Activated T-helper 1 cell treated with anti-CD3 and anti-CD28 coated beads, Interleukin-12 subunit alpha, Interleukin-12 subunit beta, Interleukin-2, Interleukin-4 antibody, amounts not matched to agents 30 ng/mL and 10 ng/mL and 1 ng/mL, durations not matched to agents 14 hours and 24 hours and 36 hours (primary cell): ENCODE measurements at regions of chr2 and their contacts with region 1.

Region 1: DNA sequence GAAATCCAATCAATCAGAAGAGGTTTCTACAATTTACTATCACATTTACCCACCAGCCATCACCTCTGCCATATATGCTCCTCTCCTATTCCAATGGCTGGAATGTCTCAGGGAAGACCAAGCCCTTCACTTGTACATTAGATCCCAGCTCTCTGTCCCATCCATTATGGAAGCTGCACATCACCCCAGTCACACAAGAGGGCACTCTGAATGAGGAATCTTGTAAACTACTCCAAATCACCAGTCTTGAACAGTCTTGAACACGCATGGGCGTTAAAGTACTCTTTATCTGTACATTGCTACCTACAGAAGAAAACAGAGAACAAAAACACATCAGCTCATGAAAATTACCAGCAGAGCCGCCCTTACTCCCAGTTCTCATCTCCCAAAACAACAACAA is 38.7 kb downstream of the ZC3H8 start:
- DNase-seq: no peak
- H3K4me3 Mint-ChIP-seq: no peak overlapping the region
- H3K27ac Mint-ChIP-seq: no peak overlapping the region
- H3K4me1 Mint-ChIP-seq: peaks cover 3% of the 10 kb centered on the region
- H3K27me3 Mint-ChIP-seq: no peaks in the 10 kb centered on the region

Region 2: DNA sequence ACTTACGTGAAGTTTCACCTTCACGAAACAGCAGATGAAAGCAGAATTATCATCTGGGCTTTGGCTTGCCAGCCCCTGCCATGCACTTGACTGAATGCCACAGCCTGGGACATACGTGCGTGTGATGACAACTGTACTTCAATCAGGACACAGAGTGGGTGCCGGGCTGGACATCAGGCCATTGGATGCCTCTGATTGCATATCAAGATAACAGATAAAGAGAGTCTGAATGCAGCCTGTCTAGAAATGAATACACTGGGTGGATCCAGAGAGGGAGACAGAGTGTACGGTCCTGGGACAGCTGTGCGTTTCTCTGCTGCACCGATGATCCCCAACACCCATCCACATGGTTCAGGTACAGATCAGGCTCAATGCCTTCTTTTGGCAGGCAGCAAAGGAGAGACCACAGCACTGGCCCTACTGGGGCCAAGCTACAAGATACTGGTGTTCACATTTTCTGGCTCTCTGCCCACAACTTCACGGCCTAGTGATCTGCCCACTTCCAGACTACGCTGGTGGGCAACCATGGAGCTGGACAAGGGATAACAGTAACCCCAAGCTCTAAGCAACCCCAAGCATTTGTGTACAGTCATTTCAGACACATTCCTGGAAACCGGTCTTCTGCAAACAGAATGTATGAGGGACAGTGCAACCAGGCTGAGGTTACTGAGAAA is 42.4 kb before region 1 on chr2:
- intact Hi-C with region 1: loop called (anchors 5 kb)
- DNase-seq: no peak
- H3K4me3 Mint-ChIP-seq: no peak overlapping the region
- H3K27ac Mint-ChIP-seq: peak overlapping the region; percentile 76
- H3K4me1 Mint-ChIP-seq: peaks cover 31% of the 10 kb centered on the region
- H3K27me3 Mint-ChIP-seq: peaks cover 2% of the 10 kb centered on the region